ENCODE measurements at regions of chr1 and their contacts with region 1.

Region 1: DNA sequence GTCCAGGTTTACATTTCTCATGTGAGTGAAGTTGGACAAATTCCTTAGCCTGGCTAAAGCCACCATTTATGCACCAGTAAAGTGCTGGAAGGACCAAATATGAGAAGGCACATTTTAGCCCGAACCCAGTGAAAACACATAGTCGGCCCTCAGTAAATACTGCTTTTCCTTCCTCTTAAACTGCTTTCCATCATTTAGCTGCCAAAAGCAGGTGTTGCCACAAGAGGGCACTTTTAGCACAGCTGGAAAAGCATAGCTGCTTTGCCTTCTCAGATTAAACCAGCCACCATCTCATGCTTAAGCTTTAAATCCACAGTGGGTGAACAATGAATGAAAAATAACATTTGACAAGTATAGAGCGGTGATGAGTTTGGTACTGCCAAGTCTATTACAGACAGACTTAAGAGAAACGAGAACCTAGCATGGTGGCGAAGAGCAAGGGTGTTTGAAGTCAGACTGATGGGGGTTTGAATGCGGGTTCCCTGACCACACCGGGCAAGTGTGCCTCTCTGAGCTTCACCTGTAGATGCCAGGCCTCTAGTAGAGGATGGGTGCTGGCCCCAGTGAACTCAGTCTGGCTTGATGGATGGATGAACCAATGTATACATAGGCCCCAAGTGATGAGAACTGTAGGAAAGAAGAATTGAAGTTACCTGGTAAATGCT is 57.8 kb downstream of the SLC35D1 start:
- DNase-seq: peak; percentile 79
- H3K4me3 Mint-ChIP-seq: no peak overlapping the region
- H3K27ac Mint-ChIP-seq: no peak overlapping the region
- H3K4me1 Mint-ChIP-seq: peaks cover 16% of the 10 kb centered on the region
- H3K27me3 Mint-ChIP-seq: no peaks in the 10 kb centered on the region

Region 2: DNA sequence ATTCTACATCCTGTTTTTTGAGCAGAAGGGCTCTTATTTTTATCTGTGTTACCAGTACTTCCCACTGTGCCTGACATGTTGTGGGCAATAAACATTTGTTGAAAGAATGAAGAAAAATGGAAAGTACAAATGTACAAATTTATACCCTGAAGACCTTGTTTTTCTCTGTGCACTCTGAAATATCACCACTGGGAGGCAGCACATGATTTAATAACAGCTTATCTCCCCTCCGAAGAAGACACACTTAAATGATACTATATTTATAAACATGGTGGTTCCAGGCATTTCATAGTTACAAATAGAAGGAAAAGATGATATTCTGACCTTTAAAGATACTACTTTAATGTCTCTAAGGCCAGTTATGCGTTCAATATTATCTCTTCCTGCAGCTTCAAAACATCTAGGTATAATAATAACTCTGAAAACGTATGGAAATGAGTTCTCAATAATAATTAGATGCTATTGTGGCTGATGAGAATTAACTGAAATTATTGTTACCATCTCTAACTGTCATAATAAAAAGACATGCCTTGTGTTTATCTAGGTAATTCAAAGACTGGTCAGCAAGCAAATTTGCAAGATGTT is 231.1 kb before region 1 on chr1:
- CTCF ChIA-PET with region 1: interaction called, 23 read pairs
- DNase-seq: peak; percentile 68
- H3K4me3 Mint-ChIP-seq: no peak overlapping the region
- H3K27ac Mint-ChIP-seq: no peak overlapping the region
- H3K4me1 Mint-ChIP-seq: peaks cover 16% of the 10 kb centered on the region
- H3K27me3 Mint-ChIP-seq: no peaks in the 10 kb centered on the region

Region 3: DNA sequence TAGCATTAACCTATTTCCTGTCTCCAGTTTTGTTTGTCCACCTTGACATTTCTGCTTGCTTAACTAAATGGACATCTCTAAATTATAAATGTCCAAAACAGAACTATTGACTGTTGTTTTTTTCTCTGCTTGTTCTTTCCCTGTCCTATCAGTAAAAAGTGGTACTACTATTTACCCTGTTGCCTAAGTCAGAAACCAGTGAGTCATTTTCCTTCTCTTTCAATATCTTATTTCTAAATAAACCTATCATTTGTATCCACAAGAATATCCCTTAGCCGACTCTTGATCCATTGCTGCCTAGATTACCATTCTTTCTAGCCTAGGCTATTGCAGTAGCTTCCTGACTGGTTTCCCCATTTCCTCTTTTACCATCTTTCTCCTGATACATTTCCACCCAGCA is 48.9 kb before region 1 on chr1:
- CTCF ChIA-PET with region 1: no interaction called
- DNase-seq: no peak
- H3K4me3 Mint-ChIP-seq: no peak overlapping the region
- H3K27ac Mint-ChIP-seq: no peak overlapping the region
- H3K4me1 Mint-ChIP-seq: peaks cover 23% of the 10 kb centered on the region
- H3K27me3 Mint-ChIP-seq: no peaks in the 10 kb centered on the region

Region 4: GRCh38 chr1:67500413-67500959 is 504.3 kb after region 1 on chr1:
- CTCF ChIA-PET with region 1: interaction called, 23 read pairs
- DNase-seq: peak; percentile 92
- H3K4me3 Mint-ChIP-seq: peak overlapping the region; percentile 18
- H3K27ac Mint-ChIP-seq: no peak overlapping the region
- H3K4me1 Mint-ChIP-seq: peaks cover 5% of the 10 kb centered on the region
- H3K27me3 Mint-ChIP-seq: peaks cover 21% of the 10 kb centered on the region

Measured in activated naive CD4-positive, alpha-beta T cell treated with anti-CD3 and anti-CD28 coated beads, Interleukin-2, amount 10 ng/mL, durations not matched to agents 7 days and 5 days (primary cell).